AG04449 (cell line): ENCODE measurements at regions of chr10 and their contacts with region 1.

Region 1: GRCh38 chr10:71390461-71390835 is 6.3 kb upstream of the CDH23 start:
- DNase-seq: no peak
- H3K4me3 ChIP-seq: no peak overlapping the region
- CTCF ChIP-seq: no peak

Region 2: GRCh38 chr10:71092812-71093401 is 297.5 kb before region 1 on chr10:
- CTCF ChIA-PET with region 1: no interaction called
- POLR2A ChIA-PET with region 1: no interaction called
- DNase-seq: no peak
- H3K4me3 ChIP-seq: no peak overlapping the region
- CTCF ChIP-seq: no peak

Region 3: GRCh38 chr10:71378336-71379117 is 11.9 kb before region 1 on chr10:
- CTCF ChIA-PET with region 1: interaction called, 54 read pairs
- POLR2A ChIA-PET with region 1: no interaction called
- DNase-seq: no peak
- H3K4me3 ChIP-seq: no peak overlapping the region
- CTCF ChIP-seq: no peak